Activated CD4-positive, alpha-beta T cell treated with anti-CD3 and anti-CD28 coated beads, Interleukin-2, amount 10 ng/mL, durations not matched to agents 24 days and 14 days (primary cell): ENCODE measurements at regions of chr15 and their contacts with region 1.

Region 1: GRCh38 chr15:94119923-94120775 is 111.2 kb upstream of the MCTP2 start:
- DNase-seq: peak; percentile 86
- H3K4me3 Mint-ChIP-seq: no peak overlapping the region
- H3K27ac Mint-ChIP-seq: no peak overlapping the region
- H3K4me1 Mint-ChIP-seq: no peaks in the 10 kb centered on the region
- H3K27me3 Mint-ChIP-seq: peaks cover 5% of the 10 kb centered on the region

Region 2: DNA sequence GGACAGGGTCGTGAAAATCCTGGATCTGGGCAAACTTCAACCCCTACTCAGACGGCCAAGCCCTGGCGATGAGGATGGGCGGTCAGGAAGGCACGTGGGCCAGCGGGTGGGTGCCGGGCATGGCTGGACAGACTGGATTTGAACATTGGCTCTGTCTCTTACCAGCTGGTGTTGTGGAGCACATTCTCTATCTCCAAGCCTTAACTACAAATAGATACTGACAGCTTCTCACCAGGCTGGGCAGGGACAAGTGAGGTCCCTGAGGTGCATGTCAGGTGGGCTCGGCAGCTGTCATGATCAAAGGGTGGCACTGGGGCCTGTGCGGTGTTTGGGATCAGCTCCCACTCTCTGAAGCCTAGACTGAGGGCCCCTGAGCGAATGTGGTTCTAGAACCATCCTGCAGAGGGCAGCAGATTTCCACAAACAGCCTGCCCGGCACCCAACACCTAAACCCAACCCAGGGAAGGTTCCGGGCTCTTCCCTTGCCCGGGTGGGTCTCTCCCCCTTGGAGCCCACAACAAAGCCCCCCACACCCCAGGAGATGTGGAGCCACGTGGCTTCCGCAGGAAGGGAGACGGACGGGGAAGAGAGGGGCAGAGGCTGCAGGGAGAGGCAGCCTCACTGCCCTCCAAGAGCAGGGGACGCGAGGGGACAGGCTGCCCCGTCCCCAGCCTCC is 1089.6 kb before region 1 on chr15:
- intact Hi-C with region 1: loop called (anchors 1 kb)
- DNase-seq: peak; percentile 90
- H3K4me3 Mint-ChIP-seq: no peak overlapping the region
- H3K27ac Mint-ChIP-seq: peak overlapping the region; percentile 29
- H3K4me1 Mint-ChIP-seq: peaks cover 18% of the 10 kb centered on the region
- H3K27me3 Mint-ChIP-seq: no peaks in the 10 kb centered on the region

Region 3: DNA sequence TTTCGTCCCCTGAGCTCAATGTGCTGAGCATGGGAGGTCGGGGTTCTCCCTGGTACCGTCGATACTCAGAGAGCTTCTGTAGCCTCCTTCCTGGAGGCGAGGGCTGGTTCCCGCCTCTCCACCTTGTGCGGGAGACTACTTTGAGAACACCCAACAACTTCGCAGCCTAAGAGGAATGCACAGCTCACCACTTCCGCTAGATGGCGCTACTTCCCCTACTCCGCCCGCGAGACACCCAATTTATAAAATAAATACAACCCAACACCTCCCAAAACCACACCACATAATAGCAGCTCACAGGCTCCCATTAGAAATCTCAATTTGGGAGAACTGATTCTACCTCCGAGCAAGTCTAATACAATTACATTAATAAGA is 1032.3 kb before region 1 on chr15:
- intact Hi-C with region 1: loop called (anchors 5 kb)
- DNase-seq: peak; percentile 91
- H3K4me3 Mint-ChIP-seq: peak overlapping the region; percentile 82
- H3K27ac Mint-ChIP-seq: peak overlapping the region; percentile 22
- H3K4me1 Mint-ChIP-seq: peaks cover 10% of the 10 kb centered on the region
- H3K27me3 Mint-ChIP-seq: peaks cover 68% of the 10 kb centered on the region

Region 4: DNA sequence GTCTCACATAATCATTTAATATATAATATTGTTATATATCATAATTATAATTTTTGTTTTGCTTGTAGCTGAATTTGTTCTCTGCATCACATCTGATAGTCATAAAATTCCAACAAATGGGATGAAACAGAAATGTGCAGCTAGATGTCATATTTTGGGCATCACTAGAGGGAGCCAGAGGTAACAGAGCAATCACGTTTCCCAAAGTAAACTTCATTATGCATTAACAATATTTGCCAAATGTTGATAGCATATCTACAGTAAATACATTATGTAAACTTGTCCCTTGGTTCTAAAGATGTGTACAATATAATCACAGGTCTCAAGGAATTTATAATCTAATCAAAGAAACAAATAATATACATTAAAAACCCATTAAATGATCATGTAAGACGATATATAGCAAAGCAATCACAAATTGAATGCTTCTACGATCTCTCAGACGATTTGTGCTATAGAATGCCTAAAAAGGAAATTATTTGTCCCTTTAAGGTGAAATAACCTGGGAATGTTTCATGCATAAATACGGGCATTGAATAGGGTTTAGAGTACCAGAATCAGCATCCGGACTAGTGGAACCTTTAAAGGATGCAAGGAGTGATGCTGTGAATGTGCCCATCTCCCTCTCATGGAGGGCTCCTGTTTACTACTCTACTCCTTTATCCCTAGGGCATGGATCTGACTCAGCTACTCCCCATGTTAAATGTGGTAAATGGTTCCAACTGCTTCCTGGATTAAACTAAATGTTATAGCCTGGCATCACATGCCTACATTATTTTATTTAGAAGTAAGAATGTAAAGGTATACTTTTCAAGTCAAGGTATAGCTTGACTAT is 122.8 kb before region 1 on chr15:
- intact Hi-C with region 1: loop called (anchors 5 kb)
- DNase-seq: no peak
- H3K4me3 Mint-ChIP-seq: no peak overlapping the region
- H3K27ac Mint-ChIP-seq: no peak overlapping the region
- H3K4me1 Mint-ChIP-seq: no peaks in the 10 kb centered on the region
- H3K27me3 Mint-ChIP-seq: peaks cover 10% of the 10 kb centered on the region